ENCODE measurements at regions of chr2 and their contacts with region 1.

Region 1: GRCh38 chr2:20446917-20447436 is at the start of gene RHOB:
- DNase-seq: peak; percentile 86
- H3K4me3 Mint-ChIP-seq: peak within 1 kb of the TSS; percentile 81
- H3K27ac Mint-ChIP-seq: peak within 1 kb of the TSS; percentile 68
- H3K4me1 Mint-ChIP-seq: peaks cover 9% of the 10 kb centered on the region
- H3K27me3 Mint-ChIP-seq: peaks cover 40% of the 10 kb centered on the region
- total RNA-seq, gene RHOB: 119 and 123 TPM in 2 replicates

Region 2: DNA sequence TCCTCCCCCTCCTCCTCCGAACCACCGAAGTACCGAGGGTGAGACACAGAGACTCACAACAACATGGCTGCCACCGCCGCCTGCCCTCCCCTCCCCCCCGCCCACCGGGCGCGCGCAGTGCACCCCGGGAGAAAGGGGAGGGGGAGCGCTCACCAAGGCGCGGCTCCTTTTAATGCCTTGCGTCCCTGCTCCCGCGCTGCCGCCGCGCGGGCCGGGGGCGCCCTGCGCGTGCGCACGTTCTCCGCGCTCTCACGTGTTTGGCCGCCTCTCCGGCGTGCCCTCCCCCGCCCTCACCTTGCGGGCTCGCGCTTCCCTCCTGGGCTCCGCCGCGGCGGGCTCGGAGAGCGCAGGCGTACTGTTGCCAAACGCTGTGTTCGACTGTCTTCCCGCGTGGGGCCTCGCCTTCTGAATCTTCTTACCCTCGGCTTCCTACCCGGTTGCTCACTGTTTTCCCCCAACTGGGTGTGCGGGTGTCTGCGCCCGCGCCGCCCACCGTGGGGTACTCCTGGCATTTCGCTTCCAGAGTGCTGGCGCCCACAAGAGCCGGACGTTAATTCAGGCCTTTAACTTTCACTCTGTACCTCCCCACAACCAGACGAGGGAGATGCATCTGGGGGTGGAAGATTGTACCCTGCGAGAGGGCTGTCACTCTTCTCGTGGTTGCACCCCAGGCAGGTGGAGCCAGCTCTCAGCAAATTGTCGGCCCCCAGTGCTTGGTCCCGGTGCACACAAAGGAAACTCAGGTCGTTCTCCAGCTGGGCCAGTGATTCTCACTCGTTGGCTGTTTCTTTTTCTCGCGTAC is 96.0 kb before region 1 on chr2 and contains the start of gene PUM2:
- intact Hi-C with region 1: loop called (anchors 1 kb)
- DNase-seq: peak; percentile 97
- H3K4me3 Mint-ChIP-seq: peak within 1 kb of the TSS; percentile 93
- H3K27ac Mint-ChIP-seq: peak within 1 kb of the TSS; percentile 92
- H3K4me1 Mint-ChIP-seq: peaks cover 34% of the 10 kb centered on the region
- H3K27me3 Mint-ChIP-seq: no peaks in the 10 kb centered on the region
- total RNA-seq, gene PUM2: 121 and 127 TPM in 2 replicates

Region 3: GRCh38 chr2:20595431-20596192 is 148.6 kb after region 1 on chr2:
- intact Hi-C with region 1: loop called (anchors 5 kb)
- DNase-seq: no peak
- H3K4me3 Mint-ChIP-seq: peak overlapping the region; percentile 23
- H3K27ac Mint-ChIP-seq: peak overlapping the region; percentile 81
- H3K4me1 Mint-ChIP-seq: peaks cover 15% of the 10 kb centered on the region
- H3K27me3 Mint-ChIP-seq: no peaks in the 10 kb centered on the region

Region 4: DNA sequence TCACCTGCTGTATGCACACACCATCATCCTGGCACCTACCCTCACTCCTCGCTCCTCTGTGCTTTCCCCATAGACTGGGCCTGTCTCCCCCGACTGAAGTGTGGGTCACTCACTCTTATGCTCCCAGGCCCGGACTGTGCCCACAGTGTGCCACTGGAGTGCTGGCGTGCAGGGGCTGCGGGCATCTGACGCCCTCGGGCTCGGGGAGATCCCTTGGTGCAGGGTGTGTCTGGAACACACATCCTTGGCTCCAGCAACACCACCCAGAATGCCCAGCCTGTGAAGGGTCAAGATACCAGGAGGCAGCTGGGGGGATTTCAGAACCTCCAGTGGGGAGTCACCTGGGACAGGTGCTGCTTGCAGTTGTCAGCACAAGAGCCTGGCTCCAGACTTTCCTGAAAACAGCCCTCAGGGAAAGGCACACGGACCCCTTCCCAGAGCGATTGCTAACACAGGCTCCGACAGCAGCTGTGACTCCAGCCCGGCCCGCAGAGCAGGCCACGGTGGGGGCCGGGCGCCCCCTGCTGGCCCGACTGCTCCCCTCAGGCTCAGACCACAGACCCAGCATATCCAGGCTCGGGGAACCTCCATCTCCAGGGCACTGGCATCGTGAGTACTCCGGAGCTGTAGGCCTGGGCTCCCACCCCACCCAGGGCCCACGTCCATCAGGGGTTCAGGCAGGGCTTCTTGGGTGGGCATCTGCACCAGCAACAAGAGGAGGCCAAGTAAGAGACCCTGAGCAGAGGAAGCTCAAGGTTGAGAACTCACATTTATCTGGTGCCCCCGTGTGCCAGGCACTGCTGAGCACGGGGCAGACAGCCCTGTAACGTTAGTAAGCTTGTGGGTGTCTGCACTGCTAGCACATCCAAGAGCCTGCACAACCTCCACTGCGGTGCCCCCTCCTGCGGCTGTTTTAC is 195.3 kb after region 1 on chr2:
- intact Hi-C with region 1: loop called (anchors 1 kb)
- DNase-seq: peak; percentile 52
- H3K4me3 Mint-ChIP-seq: no peak overlapping the region
- H3K27ac Mint-ChIP-seq: peak overlapping the region; percentile 5
- H3K4me1 Mint-ChIP-seq: no peaks in the 10 kb centered on the region
- H3K27me3 Mint-ChIP-seq: no peaks in the 10 kb centered on the region